ENCODE measurements at regions of chr10 and their contacts with region 1.

Region 1: DNA sequence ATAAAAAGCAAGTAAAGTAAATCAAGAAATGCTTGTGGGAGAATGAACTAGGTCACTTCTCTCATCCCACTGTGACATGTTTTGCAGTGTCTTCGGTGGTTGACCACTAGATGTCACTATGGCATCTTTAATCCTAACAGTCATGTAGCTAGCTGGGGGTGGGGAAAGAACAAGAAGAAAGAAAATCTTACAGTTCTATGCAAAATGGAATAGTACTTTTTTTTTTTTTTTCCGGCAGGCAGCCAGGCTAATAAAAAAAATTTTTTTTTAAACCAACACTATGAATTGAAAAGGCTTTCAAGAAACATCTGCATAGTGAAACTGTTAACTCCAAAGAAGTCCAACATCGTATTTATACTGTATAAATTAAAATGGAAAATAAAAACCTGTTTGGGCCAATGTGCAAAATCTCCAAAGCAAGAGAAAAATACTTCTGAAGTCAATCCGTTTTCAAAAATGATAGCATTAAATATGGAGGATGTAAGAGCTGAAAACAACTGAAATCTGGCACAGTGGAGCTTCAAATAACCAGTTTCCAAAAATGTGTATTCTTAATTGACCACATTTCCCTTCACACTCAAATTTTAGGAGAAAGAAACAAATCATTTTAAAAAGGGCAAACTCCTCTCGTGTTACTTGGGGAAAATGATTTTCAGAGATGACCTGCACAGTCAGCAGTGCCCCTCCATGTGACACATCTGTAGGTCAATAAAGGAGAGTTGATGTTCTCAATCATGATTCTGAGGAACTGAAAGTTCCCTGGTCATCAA is 38.5 kb downstream of the CDK1 start:
- DNase-seq: peak; percentile 63 to 79
- H3K4me3 ChIP-seq: no peak overlapping the region
- H3K4me3 Mint-ChIP-seq: no peak overlapping the region
- H3K27ac Mint-ChIP-seq: no peak overlapping the region
- H3K4me1 ChIP-seq: no peaks in the 10 kb centered on the region
- H3K4me1 Mint-ChIP-seq: no peaks in the 10 kb centered on the region
- H3K27me3 ChIP-seq: no peaks in the 10 kb centered on the region
- H3K27me3 Mint-ChIP-seq: peaks cover 13% of the 10 kb centered on the region
- CTCF ChIP-seq: peak; percentile 93 to 98

Region 2: DNA sequence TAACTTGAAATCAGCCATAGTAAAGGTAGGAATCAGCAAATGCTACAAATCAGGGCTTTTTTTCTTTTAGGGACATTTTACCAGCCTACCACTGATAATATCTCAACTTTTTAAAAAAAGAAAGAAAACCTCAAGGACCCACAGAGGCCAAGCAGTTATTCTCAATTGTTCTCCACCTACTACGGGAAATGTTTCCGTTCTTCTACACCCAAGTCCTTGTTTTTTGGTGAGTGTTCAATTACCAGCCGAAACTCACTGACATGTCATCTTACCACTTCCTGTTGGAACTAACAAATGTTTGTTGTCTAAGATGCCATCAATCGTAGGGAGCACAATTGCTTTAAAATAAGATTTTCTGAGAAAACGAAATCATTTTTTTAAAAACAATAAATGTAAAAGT is 88.8 kb before region 1 on chr10:
- CTCF ChIA-PET with region 1: no interaction called
- POLR2A ChIA-PET with region 1: no interaction called
- intact Hi-C with region 1: no loop called
- DNase-seq: no peak
- H3K4me3 ChIP-seq: no peak overlapping the region
- H3K4me3 Mint-ChIP-seq: no peak overlapping the region
- H3K27ac Mint-ChIP-seq: no peak overlapping the region
- H3K4me1 ChIP-seq: peaks cover 8% of the 10 kb centered on the region
- H3K4me1 Mint-ChIP-seq: peaks cover 21% of the 10 kb centered on the region
- H3K27me3 ChIP-seq: no peaks in the 10 kb centered on the region
- H3K27me3 Mint-ChIP-seq: no peaks in the 10 kb centered on the region
- CTCF ChIP-seq: no peak

Region 3: GRCh38 chr10:60870424-60870728 is 53.6 kb after region 1 on chr10:
- CTCF ChIA-PET with region 1: no interaction called
- POLR2A ChIA-PET with region 1: no interaction called
- intact Hi-C with region 1: no loop called
- DNase-seq: peak in 1 of 2 experiments; percentile 35
- H3K4me3 ChIP-seq: no peak overlapping the region
- H3K4me3 Mint-ChIP-seq: no peak overlapping the region
- H3K27ac Mint-ChIP-seq: no peak overlapping the region
- H3K4me1 ChIP-seq: no peaks in the 10 kb centered on the region
- H3K4me1 Mint-ChIP-seq: no peaks in the 10 kb centered on the region
- H3K27me3 ChIP-seq: no peaks in the 10 kb centered on the region
- H3K27me3 Mint-ChIP-seq: peaks cover 4% of the 10 kb centered on the region
- CTCF ChIP-seq: peak; percentile 44 to 73

Region 4: DNA sequence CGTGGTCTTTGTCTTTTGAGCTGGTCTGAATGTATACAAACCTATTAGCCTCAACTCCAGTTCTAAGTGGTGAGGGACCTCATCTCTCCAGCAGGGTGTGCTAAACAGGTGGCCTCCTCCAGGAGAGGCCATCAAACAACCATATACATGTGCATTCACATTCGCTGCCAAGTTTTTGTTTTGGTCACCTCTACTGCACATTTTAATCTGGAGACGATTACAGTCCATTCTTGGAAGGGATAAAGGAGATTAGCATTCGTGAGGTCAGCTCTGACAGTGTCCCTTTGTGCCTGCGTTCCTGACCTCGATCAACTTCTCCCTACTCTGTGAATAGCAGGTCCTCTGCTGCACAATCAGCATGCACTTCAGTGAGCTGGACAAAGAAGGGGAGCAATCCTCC is 66.4 kb after region 1 on chr10:
- CTCF ChIA-PET with region 1: no interaction called
- POLR2A ChIA-PET with region 1: no interaction called
- intact Hi-C with region 1: loop called (anchors 1 kb)
- DNase-seq: peak; percentile 54 to 64
- H3K4me3 ChIP-seq: no peak overlapping the region
- H3K4me3 Mint-ChIP-seq: no peak overlapping the region
- H3K27ac Mint-ChIP-seq: no peak overlapping the region
- H3K4me1 ChIP-seq: no peaks in the 10 kb centered on the region
- H3K4me1 Mint-ChIP-seq: no peaks in the 10 kb centered on the region
- H3K27me3 ChIP-seq: no peaks in the 10 kb centered on the region
- H3K27me3 Mint-ChIP-seq: no peaks in the 10 kb centered on the region
- CTCF ChIP-seq: peak; percentile 72 to 88

Region 5: GRCh38 chr10:60964257-60965235 is 147.7 kb after region 1 on chr10:
- CTCF ChIA-PET with region 1: interaction called, 4 read pairs
- POLR2A ChIA-PET with region 1: no interaction called
- intact Hi-C with region 1: loop called (anchors 1 kb)
- DNase-seq: peak; percentile 70 to 78
- H3K4me3 ChIP-seq: no peak overlapping the region
- H3K4me3 Mint-ChIP-seq: no peak overlapping the region
- H3K27ac Mint-ChIP-seq: no peak overlapping the region
- H3K4me1 ChIP-seq: no peaks in the 10 kb centered on the region
- H3K4me1 Mint-ChIP-seq: no peaks in the 10 kb centered on the region
- H3K27me3 ChIP-seq: no peaks in the 10 kb centered on the region
- H3K27me3 Mint-ChIP-seq: peaks cover 2% of the 10 kb centered on the region
- CTCF ChIP-seq: peak; percentile 96 to 98

Region 6: GRCh38 chr10:61189912-61190311 is 373.1 kb after region 1 on chr10:
- CTCF ChIA-PET with region 1: interaction called, 6 read pairs
- POLR2A ChIA-PET with region 1: no interaction called
- intact Hi-C with region 1: loop called (anchors 1 kb)
- DNase-seq: no peak
- H3K4me3 ChIP-seq: no peak overlapping the region
- H3K4me3 Mint-ChIP-seq: no peak overlapping the region
- H3K27ac Mint-ChIP-seq: no peak overlapping the region
- H3K4me1 ChIP-seq: no peaks in the 10 kb centered on the region
- H3K4me1 Mint-ChIP-seq: peaks cover 7% of the 10 kb centered on the region
- H3K27me3 ChIP-seq: no peaks in the 10 kb centered on the region
- H3K27me3 Mint-ChIP-seq: no peaks in the 10 kb centered on the region
- CTCF ChIP-seq: no peak

Region 7: GRCh38 chr10:61592581-61592980 is 775.8 kb after region 1 on chr10:
- CTCF ChIA-PET with region 1: interaction called, 3 read pairs
- POLR2A ChIA-PET with region 1: no interaction called
- intact Hi-C with region 1: loop called (anchors 1 kb)
- DNase-seq: peak; percentile 70
- H3K4me3 ChIP-seq: no peak overlapping the region
- H3K4me3 Mint-ChIP-seq: no peak overlapping the region
- H3K27ac Mint-ChIP-seq: no peak overlapping the region
- H3K4me1 ChIP-seq: no peaks in the 10 kb centered on the region
- H3K4me1 Mint-ChIP-seq: peaks cover 6% of the 10 kb centered on the region
- H3K27me3 ChIP-seq: 0 out of 2 replicates have a peak, but pooled peaks cover 1% of the 10 kb centered on the region
- H3K27me3 Mint-ChIP-seq: peaks cover 21% of the 10 kb centered on the region
- CTCF ChIP-seq: peak; percentile 81 to 88